ENCODE measurements at regions of chr11 and their contacts with region 1.

Region 1: GRCh38 chr11:19800714-19801440 is 88.2 kb downstream of the NAV2 start:
- DNase-seq: no peak

Region 2: GRCh38 chr11:19723572-19724342 is 77.1 kb before region 1 on chr11:
- intact Hi-C with region 1: no loop called
- DNase-seq: no peak

Region 3: GRCh38 chr11:19756675-19757475 is 44.0 kb before region 1 on chr11:
- intact Hi-C with region 1: loop called in 1 of 2 experiments (anchors 1 kb)
- DNase-seq: peak; percentile 81